ENCODE measurements at regions of chr4 and their contacts with region 1.

Region 1: DNA sequence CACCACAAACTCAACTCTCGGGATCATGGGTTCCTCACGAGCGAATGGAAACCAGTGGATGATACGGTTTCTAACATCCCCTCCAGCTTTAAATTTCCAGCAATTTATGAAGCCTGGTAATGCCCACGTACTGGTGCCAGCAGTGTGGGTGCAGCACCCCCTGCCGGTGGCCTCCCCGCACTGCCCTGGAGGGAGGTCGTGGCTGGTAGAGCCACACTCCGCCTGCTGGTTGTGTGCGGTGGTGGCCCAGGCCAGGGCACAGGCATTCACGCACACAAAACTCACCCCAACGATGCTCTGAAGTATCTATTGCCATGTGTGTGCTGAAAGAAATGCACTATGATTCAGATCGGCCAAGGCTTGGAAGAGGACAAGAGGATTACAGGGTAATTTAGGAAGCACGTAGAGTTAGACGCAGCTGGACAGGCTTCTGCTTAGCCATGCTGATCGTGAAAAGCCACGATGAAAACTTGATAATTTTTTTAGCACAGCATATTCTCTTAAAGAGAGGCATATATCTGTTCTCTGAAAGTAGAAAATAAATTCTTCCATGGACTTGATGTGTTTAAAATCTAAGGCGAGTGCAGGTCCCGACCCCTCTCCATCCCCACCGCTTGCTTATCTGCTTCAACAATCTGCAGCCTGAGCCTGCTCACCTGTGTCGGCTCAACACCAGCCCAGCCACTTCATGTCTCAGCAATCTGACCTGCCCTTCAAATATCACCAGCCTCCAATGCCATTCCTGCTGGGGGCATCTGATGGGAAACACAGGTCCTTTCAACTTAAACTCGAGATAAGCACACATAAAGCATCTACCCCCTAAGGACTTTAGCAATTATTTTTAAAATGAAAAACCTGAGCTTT is 59.0 kb downstream of the SCD5 start:
- DNase-seq: peak; percentile 61 to 97
- H3K4me3 ChIP-seq: no peak overlapping the region
- H3K27ac ChIP-seq: no peak overlapping the region
- H3K4me1 ChIP-seq: peaks cover 0 to 2% (median 0%) of the 10 kb centered on the region in 4 experiments; a peak in 1 of 7 replicates
- H3K27me3 ChIP-seq: no peaks in the 10 kb centered on the region
- CTCF ChIP-seq: peak; percentile 100
- EP300 ChIP-seq: no peak
- POLR2A ChIP-seq: no peak
- RAD21 ChIP-seq: peak; percentile 100

Region 2: DNA sequence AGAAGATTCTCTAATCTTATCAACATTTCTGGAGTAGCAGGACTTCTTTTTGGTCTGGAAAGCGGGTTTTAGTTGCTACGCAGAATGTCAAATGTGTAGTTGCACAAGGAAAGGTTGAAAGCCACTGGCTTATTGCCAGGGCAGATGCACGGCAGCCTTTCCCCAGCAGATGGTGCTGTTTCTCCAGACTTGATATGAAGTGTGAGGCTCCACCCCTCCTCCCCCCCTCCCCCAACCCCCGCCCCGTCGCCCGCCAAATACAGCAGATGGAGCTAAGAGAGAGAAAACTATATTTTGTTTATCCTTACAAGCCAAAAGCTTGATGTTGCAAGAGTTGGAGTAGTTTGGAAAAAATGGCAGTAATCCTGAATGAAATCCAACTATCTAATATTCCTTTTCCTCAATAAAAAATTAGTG is 277.1 kb before region 1 on chr4:
- CTCF ChIA-PET with region 1: interaction called, 160 read pairs
- POLR2A ChIA-PET with region 1: interaction called, 3 read pairs
- DNase-seq: peak; percentile 64 to 95
- H3K4me3 ChIP-seq: no peak overlapping the region
- H3K27ac ChIP-seq: no peak overlapping the region
- H3K4me1 ChIP-seq: no peaks in the 10 kb centered on the region
- H3K27me3 ChIP-seq: no peaks in the 10 kb centered on the region
- CTCF ChIP-seq: peak; percentile 74 to 88 (median 78)
- EP300 ChIP-seq: no peak
- POLR2A ChIP-seq: no peak
- RAD21 ChIP-seq: peak; percentile 81 to 83

Region 3: DNA sequence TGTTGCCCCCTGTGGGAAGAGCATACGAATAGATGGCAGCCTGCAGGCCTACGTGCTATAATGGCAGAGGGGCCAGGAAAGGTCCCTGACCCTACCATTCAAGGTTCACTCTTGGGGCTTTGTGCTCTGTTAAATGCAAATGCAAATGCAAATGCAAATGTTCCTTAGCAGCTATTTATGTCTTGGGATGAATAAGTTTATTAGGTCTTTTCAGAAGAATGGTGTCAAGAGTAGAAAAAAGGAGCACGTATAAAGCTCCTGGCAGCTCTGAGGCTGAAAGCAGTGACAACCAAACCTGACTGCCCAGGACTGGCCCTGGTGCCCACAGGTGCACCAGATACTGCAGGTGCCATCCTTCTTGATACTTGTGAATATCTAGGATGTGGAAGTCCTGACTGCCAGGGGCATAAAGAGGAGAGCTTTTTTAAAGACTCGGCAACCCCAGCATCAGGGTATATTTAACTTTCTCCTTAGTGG is 238.5 kb before region 1 on chr4:
- CTCF ChIA-PET with region 1: interaction called, 16 read pairs
- POLR2A ChIA-PET with region 1: no interaction called
- DNase-seq: no peak
- H3K4me3 ChIP-seq: no peak overlapping the region; a peak in 1 of 8 replicates
- H3K27ac ChIP-seq: no peak overlapping the region
- H3K4me1 ChIP-seq: peaks cover 4 to 11% (median 10%) of the 10 kb centered on the region in 4 experiments; a peak in 5 of 7 replicates
- H3K27me3 ChIP-seq: no peaks in the 10 kb centered on the region
- CTCF ChIP-seq: no peak
- EP300 ChIP-seq: no peak
- POLR2A ChIP-seq: no peak
- RAD21 ChIP-seq: no peak

Region 4: DNA sequence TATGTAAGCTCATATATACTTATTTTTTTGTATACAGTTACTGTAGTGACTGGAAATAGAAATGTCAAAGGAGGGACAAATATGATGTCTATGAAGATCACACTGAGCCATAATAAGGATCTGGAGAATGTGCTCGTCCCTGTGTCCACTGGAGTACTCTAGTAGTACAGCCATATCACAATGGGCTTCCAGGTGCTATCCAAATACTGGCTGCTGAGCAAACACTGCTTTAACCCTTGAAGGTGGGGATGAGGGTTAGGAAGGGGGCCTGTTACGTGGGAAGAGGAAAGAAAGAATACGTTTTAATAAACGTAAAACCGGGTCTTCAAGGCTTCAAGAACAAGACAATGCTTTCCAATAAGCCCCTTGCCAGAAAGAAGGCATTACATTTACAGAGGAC is 148.0 kb before region 1 on chr4:
- CTCF ChIA-PET with region 1: interaction called, 23 read pairs
- POLR2A ChIA-PET with region 1: no interaction called
- DNase-seq: no peak
- H3K4me3 ChIP-seq: no peak overlapping the region; a peak in 1 of 8 replicates
- H3K27ac ChIP-seq: no peak overlapping the region
- H3K4me1 ChIP-seq: peaks cover 2 to 14% (median 10%) of the 10 kb centered on the region in 4 experiments
- H3K27me3 ChIP-seq: no peaks in the 10 kb centered on the region
- CTCF ChIP-seq: no peak
- EP300 ChIP-seq: no peak
- POLR2A ChIP-seq: no peak
- RAD21 ChIP-seq: no peak

Region 5: GRCh38 chr4:82618103-82618720 is 121.3 kb before region 1 on chr4:
- CTCF ChIA-PET with region 1: interaction called, 16 read pairs
- POLR2A ChIA-PET with region 1: no interaction called
- DNase-seq: no peak
- H3K4me3 ChIP-seq: no peak overlapping the region
- H3K27ac ChIP-seq: no peak overlapping the region
- H3K4me1 ChIP-seq: no peaks in the 10 kb centered on the region
- H3K27me3 ChIP-seq: no peaks in the 10 kb centered on the region
- CTCF ChIP-seq: no peak
- EP300 ChIP-seq: no peak
- POLR2A ChIP-seq: no peak
- RAD21 ChIP-seq: no peak

Region 6: GRCh38 chr4:82721819-82722423 is 17.6 kb before region 1 on chr4:
- CTCF ChIA-PET with region 1: interaction called, 57 read pairs
- POLR2A ChIA-PET with region 1: interaction called, 4 read pairs
- DNase-seq: no peak
- H3K4me3 ChIP-seq: no peak overlapping the region
- H3K27ac ChIP-seq: no peak overlapping the region
- H3K4me1 ChIP-seq: no peaks in the 10 kb centered on the region
- H3K27me3 ChIP-seq: no peaks in the 10 kb centered on the region
- CTCF ChIP-seq: peak; percentile 8 to 54 (median 37); a peak in 2 of 4 replicates
- EP300 ChIP-seq: no peak
- POLR2A ChIP-seq: no peak
- RAD21 ChIP-seq: peak in 1 of 2 experiments; percentile 14; a peak in 2 of 4 replicates

Region 7: GRCh38 chr4:82785611-82786400 is 46.3 kb after region 1 on chr4:
- CTCF ChIA-PET with region 1: interaction called, 13 read pairs
- POLR2A ChIA-PET with region 1: interaction called, 3 read pairs
- DNase-seq: no peak
- H3K4me3 ChIP-seq: peak overlapping the region in 1 of 4 experiments; percentile 15; a peak in 1 of 8 replicates
- H3K27ac ChIP-seq: no peak overlapping the region
- H3K4me1 ChIP-seq: peaks cover 0 to 11% (median 3%) of the 10 kb centered on the region in 4 experiments; a peak in 4 of 7 replicates
- H3K27me3 ChIP-seq: peaks cover 67 to 96% (median 92%) of the 10 kb centered on the region in 4 experiments
- CTCF ChIP-seq: no peak
- EP300 ChIP-seq: no peak; a peak in 1 of 3 replicates
- POLR2A ChIP-seq: no peak
- RAD21 ChIP-seq: no peak

Region 8: DNA sequence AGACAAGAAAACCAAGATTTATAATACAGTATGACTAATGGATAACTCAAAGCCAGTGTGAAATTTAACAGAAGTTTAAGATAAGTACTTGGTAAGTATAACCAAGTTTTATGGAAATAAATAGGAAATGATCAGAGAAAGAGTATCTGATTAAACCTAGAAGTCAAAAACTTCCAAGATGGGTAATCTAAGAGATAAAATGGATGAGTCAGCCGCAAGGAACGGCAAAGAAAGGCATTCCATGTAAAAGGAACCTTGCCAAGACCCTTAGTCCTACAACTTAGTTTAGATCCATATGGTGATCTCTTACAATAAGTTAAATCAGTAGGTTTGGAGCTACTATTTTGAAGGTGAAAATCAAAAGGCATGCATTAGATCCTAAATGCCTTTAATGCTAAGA is 236.2 kb after region 1 on chr4:
- CTCF ChIA-PET with region 1: no interaction called
- POLR2A ChIA-PET with region 1: no interaction called
- DNase-seq: no peak
- H3K4me3 ChIP-seq: no peak overlapping the region
- H3K27ac ChIP-seq: no peak overlapping the region
- H3K4me1 ChIP-seq: no peaks in the 10 kb centered on the region
- H3K27me3 ChIP-seq: no peaks in the 10 kb centered on the region
- CTCF ChIP-seq: no peak
- EP300 ChIP-seq: no peak
- POLR2A ChIP-seq: no peak
- RAD21 ChIP-seq: no peak